ENCODE measurements at regions of chr20 and their contacts with region 1.

Region 1: DNA sequence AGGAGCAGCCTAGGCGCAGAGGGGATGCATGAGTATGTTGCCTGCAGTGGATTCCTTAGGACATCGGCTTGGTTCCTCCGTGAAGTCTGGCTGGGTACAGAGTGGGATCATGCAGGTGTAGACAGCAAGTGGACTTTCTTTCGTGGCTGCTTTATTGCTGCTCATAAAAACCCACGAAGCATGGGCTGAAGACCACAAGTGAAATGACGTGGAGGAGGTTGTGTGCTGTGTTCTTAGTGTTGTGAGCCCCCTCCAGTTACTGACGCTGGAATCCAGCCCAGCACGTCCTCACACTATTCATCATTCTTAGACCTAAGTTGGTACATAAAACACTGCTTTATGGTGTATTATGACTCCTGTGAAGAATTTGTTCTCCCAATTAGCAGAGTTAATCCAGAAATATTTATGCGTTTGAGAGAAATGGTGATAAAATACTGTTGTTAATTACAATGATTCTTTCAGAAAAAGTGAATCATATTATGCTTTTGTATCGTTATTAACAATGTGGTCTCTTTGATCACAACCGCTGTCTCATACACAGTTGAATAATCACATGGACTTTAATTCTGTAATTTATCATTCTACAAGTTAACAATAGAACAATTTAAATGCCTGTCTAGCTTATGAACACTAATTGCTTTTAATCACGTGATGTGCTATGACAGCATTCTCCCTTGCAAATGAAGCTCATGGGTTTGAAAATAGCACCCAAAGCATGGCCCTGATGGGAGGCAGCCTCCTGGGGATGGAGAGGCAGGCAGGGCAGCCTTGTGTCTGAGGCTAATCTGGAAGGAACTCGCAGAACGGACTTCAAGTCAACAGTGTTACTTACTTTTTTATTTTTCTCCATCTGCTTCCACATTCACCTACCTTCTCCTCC is 233.9 kb upstream of the SYNDIG1 start:
- DNase-seq: no peak
- H3K4me3 ChIP-seq: no peak overlapping the region
- H3K27ac ChIP-seq: no peak overlapping the region
- H3K4me1 ChIP-seq: no peaks in the 10 kb centered on the region
- H3K27me3 ChIP-seq: no peaks in the 10 kb centered on the region
- CTCF ChIP-seq: no peak
- POLR2A ChIP-seq: no peak

Region 2: DNA sequence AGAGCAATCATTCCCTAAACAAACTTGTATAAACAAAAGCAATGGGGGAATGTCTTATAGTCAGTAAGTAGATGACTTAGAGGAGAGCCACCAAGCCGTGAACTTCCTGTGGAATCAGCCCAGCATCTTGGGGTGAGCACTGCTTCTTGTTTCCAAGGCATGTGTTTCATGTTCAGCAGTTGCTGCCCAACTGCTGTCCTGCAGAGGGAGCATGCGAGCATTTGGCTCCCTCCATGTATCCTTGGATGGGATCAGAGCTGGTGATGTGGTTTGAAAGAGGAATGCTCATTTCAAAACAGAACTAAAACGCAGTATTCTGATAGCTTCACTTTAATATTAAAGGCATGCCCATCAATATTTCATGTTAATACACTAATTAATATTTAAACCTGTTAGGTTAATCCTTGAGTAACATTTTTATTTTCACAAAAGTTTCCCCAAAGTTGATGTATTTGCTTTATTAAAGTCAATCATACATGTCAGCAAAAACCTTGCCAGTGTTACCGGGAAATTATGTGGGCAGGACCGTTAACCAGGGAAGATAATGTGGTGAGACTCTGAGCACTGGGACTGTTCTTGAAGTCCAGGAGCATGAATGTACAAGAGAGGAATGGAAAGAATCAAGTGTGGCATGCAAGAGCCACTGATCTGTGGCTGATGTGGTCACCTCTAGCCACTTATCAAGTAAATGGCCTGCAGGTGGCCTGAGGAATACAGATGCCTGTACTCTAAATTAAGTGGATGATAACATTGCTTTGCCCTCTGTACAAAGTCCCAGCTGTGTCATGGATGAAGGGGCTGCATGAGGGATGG is 74.8 kb before region 1 on chr20:
- intact Hi-C with region 1: no loop called
- DNase-seq: no peak
- H3K4me3 ChIP-seq: no peak overlapping the region
- H3K27ac ChIP-seq: no peak overlapping the region
- H3K4me1 ChIP-seq: no peaks in the 10 kb centered on the region
- H3K27me3 ChIP-seq: no peaks in the 10 kb centered on the region
- CTCF ChIP-seq: peak in 2 of 3 donors; percentile 37 to 63
- POLR2A ChIP-seq: no peak

Region 3: DNA sequence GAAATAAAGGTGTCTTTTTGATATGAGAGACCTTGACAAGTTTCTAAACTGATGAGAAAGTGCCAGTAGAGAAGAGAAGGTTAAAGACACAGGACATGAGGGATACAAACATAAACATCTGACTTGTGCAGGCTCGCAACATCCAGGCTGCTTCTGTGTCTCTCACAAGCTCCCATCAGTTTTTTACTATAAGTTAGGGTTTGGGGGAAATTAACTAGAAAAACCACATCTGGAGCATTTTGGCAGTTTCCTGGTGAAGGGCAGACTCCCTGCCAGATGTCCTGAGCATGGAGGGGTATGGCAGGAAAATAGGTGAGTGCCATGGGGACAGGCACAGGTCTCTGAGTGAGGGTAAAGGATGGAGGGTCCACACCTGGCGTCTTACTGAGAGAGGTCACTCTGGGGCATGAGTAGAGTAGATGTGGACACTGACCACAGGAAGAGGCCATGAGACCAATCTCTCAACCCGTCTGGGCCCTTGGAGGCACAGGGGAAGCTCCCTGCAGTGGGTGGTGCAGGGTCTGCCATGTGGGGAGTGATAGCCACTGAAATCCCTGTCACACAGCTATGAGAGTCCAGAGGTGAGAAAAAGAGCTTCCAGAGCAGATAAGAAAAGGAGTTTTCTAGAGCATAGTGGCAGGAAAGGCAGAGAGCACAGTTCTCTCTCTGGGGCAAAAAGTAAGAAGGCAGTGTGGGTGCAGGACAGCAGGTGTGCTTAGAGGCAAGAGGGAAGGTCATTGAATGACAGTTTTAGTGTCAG is 40.6 kb after region 1 on chr20:
- intact Hi-C with region 1: loop called (anchors 2 kb)
- DNase-seq: no peak
- H3K4me3 ChIP-seq: no peak overlapping the region
- H3K27ac ChIP-seq: no peak overlapping the region
- H3K4me1 ChIP-seq: no peaks in the 10 kb centered on the region
- H3K27me3 ChIP-seq: peaks cover 0 to 6% of the 10 kb centered on the region in 2 donors
- CTCF ChIP-seq: no peak
- POLR2A ChIP-seq: no peak

Measured in breast epithelium (tissue), 4 donors.